OCI-LY7 (cell line): ENCODE measurements at regions of chr7 and their contacts with region 1.

Region 1: DNA sequence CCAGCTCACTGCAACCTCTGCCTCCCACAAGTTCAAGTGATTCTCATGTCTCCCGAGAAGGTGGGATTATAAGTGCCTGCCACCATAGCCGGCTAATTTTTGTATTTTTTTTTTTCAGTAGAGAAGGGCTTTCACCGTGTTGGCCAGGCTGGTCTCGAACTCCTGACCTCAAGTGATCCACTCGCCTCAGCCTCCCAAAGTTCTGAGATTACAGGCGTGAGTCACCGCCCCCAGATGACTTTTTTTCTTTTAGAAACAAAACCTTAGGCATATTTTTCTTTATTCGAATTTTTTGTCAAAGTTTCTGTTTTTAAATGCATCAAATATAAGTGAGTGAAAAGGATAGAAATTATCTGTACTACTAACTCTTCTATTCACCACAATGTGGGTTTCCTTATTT is 113.1 kb downstream of the LRRC4 start:
- DNase-seq: no peak
- H3K4me3 ChIP-seq: no peak overlapping the region
- H3K27ac ChIP-seq: no peak overlapping the region
- H3K4me1 ChIP-seq: peaks cover 5% of the 10 kb centered on the region
- CTCF ChIP-seq: no peak

Region 2: DNA sequence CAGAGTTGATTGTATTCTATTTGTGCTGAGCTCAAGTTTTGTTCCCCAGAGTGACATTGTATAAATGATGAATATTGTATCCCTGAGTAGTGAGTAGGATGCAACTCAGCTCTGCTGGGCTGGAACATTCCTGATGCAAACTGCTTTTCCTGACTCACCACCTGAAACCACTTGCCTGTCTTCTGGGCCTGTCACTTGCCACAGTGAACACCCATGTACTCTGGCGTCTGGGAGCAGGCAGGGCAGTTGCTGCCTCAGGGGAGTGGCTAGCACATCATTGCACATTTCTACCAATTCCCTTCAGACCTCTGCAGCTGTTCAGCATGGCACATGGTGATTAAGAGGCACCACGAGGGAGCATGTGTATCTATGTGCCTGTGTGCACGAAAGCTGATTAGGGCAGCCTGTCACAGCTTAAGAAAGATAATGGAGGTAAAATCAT is 108.8 kb before region 1 on chr7:
- CTCF ChIA-PET with region 1: no interaction called
- POLR2A ChIA-PET with region 1: no interaction called
- intact Hi-C with region 1: no loop called
- DNase-seq: no peak
- H3K4me3 ChIP-seq: no peak overlapping the region
- H3K27ac ChIP-seq: no peak overlapping the region
- H3K4me1 ChIP-seq: no peaks in the 10 kb centered on the region
- CTCF ChIP-seq: no peak

Region 3: GRCh38 chr7:127905491-127906330 is 12.4 kb before region 1 on chr7:
- CTCF ChIA-PET with region 1: no interaction called
- POLR2A ChIA-PET with region 1: interaction called, 29 read pairs
- intact Hi-C with region 1: no loop called
- DNase-seq: no peak
- H3K4me3 ChIP-seq: no peak overlapping the region
- H3K27ac ChIP-seq: no peak overlapping the region
- H3K4me1 ChIP-seq: peaks cover 54% of the 10 kb centered on the region
- CTCF ChIP-seq: no peak

Region 4: DNA sequence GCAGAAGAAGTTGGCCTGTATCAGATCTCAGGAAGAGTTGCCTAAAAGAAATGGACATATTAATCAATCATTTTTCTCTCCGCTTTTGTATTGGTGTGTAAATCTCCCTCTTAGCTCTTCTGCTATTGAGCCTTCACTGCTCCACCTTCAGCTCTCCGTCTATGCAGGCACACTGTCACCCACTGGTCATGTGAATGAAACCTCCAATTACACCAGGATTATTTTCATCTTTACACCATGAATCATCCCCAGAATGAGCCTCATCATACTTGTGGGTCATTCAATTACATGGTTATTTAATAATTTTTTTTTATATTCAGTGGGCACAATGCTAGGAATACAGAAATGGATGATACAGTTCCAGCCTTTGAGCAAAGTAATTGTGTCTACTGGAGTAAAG is 20.5 kb after region 1 on chr7:
- CTCF ChIA-PET with region 1: no interaction called
- POLR2A ChIA-PET with region 1: no interaction called
- intact Hi-C with region 1: no loop called
- DNase-seq: no peak
- H3K4me3 ChIP-seq: no peak overlapping the region
- H3K27ac ChIP-seq: no peak overlapping the region
- H3K4me1 ChIP-seq: peaks cover 3% of the 10 kb centered on the region
- CTCF ChIP-seq: no peak

Region 5: DNA sequence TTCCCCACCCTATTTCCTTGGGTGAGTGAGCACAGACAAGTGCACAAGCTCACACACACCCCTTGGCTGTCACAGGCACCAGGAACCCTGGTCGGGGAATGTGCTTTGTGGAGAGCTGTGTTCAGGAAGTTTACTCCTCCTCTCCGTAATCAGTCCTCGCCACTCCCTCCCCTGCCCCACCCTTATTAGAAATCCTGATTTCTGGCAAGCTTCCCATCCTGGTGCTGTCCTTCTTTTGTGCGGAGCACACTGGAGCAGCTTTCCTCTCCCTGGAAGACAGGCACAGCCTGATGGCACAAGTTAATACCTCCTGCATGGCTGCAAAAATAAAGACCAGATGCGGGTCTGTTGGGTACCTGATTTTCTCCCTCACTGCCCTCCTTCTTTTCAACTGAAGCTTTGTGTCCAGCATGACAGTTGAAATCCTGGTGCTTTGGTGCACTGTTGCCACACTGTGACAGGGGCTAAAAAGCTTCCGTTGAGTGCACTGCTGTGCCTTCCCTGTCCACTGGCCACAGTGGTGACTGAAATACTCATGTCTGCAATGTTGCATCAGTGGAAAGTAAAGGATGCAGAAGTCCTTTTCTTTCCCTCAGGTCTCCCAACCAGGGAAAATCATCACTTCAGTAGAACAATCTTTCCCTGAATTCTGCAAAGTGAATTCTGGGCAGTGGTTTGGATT is 58.1 kb after region 1 on chr7:
- CTCF ChIA-PET with region 1: no interaction called
- POLR2A ChIA-PET with region 1: no interaction called
- intact Hi-C with region 1: no loop called
- DNase-seq: no peak
- H3K4me3 ChIP-seq: no peak overlapping the region
- H3K27ac ChIP-seq: no peak overlapping the region
- H3K4me1 ChIP-seq: no peaks in the 10 kb centered on the region
- CTCF ChIP-seq: no peak